Left cardiac atrium (tissue), 4 donors: ENCODE measurements at regions of chr10 and their contacts with region 1.

Region 1: DNA sequence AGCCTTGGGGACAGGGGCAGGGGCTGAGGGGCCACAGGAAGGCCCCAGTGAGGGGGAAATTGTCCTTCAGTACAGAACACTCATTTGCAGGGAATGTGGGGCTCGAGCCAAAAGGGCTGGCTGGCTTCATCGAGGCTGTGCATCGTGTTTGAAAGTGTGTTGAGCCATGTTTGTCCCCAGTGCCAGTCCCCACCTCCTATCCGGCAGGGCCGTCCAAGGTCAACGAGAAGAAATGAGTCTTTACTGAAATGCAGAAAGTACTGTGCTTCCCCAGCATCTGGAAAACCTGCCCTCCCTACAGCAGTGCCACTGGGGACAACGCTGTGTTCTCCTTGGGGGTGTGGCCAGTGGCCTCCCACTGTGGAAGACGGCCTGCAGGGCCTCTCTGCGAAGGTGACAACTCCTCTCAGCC is 214.1 kb downstream of the KLF6 start:
- DNase-seq: peak; percentile 52
- ATAC-seq: peak; percentile 63 to 83

Region 2: GRCh38 chr10:3435671-3436070 is 135.2 kb before region 1 on chr10:
- intact Hi-C with region 1: no loop called
- DNase-seq: no peak
- ATAC-seq: no peak

Region 3: DNA sequence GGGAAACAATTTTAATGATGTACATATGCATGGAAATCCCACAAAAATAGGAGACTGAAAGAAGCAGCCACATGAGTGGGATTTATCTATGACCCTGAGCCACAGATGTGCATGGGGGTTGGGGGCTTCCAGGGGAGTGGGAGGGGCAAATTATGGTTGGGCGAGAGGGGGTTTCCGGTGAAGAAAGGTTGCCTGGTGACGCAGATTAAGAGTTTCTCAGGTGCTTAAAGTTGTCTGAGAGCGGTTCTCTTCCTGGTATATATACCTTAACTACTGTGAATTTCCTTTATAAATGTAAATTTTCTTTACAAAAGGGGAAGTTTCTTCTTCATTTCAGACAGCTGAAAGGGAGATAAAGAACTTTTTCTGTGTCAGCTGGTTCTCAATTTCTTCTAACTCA is 124.6 kb before region 1 on chr10:
- intact Hi-C with region 1: no loop called
- DNase-seq: no peak
- ATAC-seq: no peak

Region 4: GRCh38 chr10:3500408-3500856 is 70.4 kb before region 1 on chr10:
- intact Hi-C with region 1: loop called in 1 of 2 experiments (anchors 5 kb)
- DNase-seq: peak; percentile 84
- ATAC-seq: peak; percentile 87 to 94

Region 5: DNA sequence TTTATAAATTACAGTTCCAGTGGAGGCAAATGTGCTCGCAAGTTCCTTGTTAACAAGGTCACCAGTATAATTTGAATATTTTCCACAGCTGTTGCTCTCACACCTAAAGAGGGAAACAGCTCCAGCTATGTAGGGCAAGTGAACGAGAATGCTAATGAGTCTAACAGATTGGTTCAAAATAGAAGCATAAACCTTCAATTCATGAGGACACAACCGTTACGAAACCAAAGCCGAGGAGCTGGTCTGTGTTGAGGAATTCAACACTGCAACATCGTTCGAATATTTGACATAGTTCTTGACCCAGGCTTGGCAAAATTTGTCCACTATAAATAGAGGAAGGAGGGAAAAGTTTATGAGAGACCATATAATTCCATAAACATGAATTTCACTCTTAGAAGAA is 52.9 kb after region 1 on chr10:
- intact Hi-C with region 1: loop called in 1 of 2 experiments (anchors 10 kb)
- DNase-seq: no peak
- ATAC-seq: peak; percentile 87 to 94